Naive thymus-derived CD8-positive, alpha-beta T cell (primary cell): ENCODE measurements at regions of chr6 and their contacts with region 1.

Region 1: DNA sequence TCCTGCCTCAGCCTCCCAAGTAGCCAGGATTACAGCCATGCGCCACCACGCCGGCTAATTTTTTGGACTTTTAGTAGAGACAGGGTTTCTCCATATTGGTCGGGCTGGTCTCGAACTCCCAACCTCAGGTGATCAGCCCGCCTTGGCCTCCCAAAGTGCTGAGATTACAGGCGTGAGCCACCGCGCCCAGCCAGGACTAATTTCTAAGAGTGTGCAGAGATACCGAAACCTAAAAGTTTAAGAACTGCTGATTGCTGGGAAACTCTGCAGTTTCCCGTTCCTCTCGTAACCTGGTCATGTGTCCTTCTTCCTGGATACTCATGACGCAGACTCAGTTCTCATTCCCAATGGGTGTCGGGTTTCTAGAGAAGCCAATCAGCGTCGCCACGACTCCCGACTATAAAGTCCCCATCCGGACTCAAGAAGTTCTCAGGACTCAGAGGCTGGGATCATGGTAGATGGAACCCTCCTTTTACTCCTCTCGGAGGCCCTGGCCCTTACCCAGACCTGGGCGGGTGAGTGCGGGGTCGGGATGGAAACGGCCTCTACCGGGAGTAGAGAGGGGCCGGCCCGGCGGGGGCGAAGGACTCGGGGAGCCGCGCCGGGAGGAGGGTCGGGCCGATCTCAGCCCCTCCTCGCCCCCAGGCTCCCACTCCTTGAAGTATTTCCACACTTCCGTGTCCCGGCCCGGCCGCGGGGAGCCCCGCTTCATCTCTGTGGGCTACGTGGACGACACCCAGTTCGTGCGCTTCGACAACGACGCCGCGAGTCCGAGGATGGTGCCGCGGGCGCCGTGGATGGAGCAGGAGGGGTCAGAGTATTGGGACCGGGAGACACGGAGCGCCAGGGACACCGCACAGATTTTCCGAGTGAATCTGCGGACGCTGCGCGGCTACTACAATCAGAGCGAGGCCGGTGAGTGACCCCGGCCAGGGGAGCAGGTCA is at the start of gene HLA-E:
- DNase-seq: peak; percentile 59 to 97 (median 92)
- ATAC-seq: peak; percentile 79 to 82
- H3K4me3 Mint-ChIP-seq: peak within 1 kb of the TSS; percentile 95 to 100 (median 99)
- H3K27ac Mint-ChIP-seq: peak within 1 kb of the TSS; percentile 97 to 100 (median 98)
- H3K4me1 Mint-ChIP-seq: peaks cover 34 to 61% (median 49%) of the 10 kb centered on the region in 4 donors
- H3K27me3 Mint-ChIP-seq: no peaks in the 10 kb centered on the region
- polyA plus RNA-seq, gene HLA-E: 2,699 to 2,977 (median 2,826) TPM

Region 2: GRCh38 chr6:30272017-30272416 is 217.3 kb before region 1 on chr6:
- POLR2A ChIA-PET with region 1: no interaction called
- DNase-seq: no peak
- ATAC-seq: no peak
- H3K4me3 Mint-ChIP-seq: no peak overlapping the region
- H3K27ac Mint-ChIP-seq: no peak overlapping the region
- H3K4me1 Mint-ChIP-seq: no peaks in the 10 kb centered on the region
- H3K27me3 Mint-ChIP-seq: peaks cover 0 to 19% (median 8%) of the 10 kb centered on the region in 5 donors

Region 3: DNA sequence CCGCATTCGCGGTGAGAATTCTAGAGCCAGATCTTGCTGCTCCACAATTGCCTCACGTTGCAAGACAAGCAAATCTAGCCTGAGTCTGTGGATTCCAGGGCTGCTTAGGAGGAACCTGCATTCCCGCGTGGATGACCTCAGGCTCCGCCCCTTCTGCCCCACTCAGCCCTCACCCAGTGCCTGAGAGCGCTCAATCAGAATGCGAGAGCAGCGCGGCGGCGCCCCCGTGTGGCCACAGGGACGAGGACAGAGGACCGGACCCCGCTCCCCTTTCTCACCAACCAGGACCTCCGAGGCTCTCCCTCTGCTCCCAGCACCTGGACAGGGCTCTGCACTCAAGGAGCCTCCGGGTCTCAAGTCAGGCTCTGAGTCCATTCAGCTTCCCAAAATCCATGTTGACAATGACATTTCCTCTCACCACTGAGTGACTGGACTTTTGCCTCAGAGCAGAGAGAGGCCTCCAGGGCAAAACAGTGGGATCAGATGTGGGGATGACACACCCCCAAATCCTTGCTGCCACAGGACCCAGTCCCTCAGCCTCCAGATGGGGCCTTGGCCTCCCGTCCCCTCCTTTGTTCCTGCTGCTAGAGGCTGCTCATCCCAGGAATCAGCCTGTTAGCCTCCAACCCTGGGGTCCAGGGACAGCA is 92.4 kb before region 1 on chr6:
- POLR2A ChIA-PET with region 1: no interaction called
- DNase-seq: peak; percentile 71 to 90 (median 82)
- ATAC-seq: peak; percentile 100
- H3K4me3 Mint-ChIP-seq: peak overlapping the region in 1 of 10 donors; percentile 18
- H3K27ac Mint-ChIP-seq: peak overlapping the region in 1 of 10 donors; percentile 77
- H3K4me1 Mint-ChIP-seq: peaks cover 0 to 1% (median 0%) of the 10 kb centered on the region in 4 donors
- H3K27me3 Mint-ChIP-seq: peaks cover 15 to 60% (median 33%) of the 10 kb centered on the region in 5 donors

Region 4: GRCh38 chr6:30443657-30444450 is 45.5 kb before region 1 on chr6:
- POLR2A ChIA-PET with region 1: no interaction called
- DNase-seq: no peak
- ATAC-seq: peak in 1 of 2 donors; percentile 42
- H3K4me3 Mint-ChIP-seq: peak overlapping the region in 2 of 10 donors; percentile 2 to 9
- H3K27ac Mint-ChIP-seq: no peak overlapping the region
- H3K4me1 Mint-ChIP-seq: peaks cover 3 to 10% (median 4%) of the 10 kb centered on the region in 4 donors
- H3K27me3 Mint-ChIP-seq: peaks cover 68 to 94% (median 76%) of the 10 kb centered on the region in 5 donors

Region 5: DNA sequence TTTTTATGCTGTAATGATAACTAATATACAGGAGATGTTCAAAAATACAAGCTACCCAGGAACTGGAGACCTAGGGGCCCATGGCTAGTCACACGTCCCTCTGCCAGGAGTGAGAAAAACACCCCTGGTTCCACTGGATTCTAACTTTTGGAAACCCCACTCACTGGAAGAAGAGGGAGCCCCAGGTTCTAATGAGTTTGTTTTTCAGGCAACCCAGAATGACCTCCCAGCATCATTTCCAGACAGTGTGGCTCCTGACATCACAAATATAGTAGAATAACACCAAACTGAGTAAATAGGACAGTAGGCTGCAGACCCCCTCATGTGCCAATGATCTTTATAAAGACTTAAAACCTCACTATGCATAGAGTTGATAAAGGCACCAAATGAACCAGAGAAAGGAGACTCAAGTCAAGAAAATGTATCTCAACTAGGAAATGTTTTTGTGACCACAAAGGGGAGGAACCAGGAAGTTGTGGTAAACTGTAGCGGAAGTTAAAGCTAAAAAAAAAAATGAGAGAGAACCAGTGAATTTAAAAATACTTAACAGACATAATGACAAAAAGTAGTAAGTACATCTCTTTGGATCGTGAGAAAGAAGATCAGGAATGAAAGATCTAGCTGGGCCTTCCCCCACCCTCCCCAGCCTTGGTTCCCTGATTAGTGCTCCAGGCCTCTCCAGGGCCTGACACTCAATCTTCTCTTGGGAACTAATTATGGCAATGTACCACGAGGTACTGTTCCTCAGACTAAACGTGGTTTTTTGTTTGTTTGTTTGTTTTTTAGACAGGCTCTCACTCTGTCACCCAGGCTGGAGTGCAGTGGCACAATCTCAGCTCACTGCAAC is 19.8 kb after region 1 on chr6:
- POLR2A ChIA-PET with region 1: interaction called, 540 read pairs
- DNase-seq: peak in 5 of 10 donors; percentile 53 to 87 (median 86)
- ATAC-seq: peak; percentile 88 to 90
- H3K4me3 Mint-ChIP-seq: peak overlapping the region; percentile 65 to 87 (median 76)
- H3K27ac Mint-ChIP-seq: peak overlapping the region; percentile 53 to 96 (median 88)
- H3K4me1 Mint-ChIP-seq: peaks cover 22 to 76% (median 65%) of the 10 kb centered on the region in 4 donors
- H3K27me3 Mint-ChIP-seq: peaks cover 0 to 2% (median 0%) of the 10 kb centered on the region in 5 donors

Region 6: GRCh38 chr6:30533460-30534294 is 44.3 kb after region 1 on chr6:
- POLR2A ChIA-PET with region 1: interaction called, 213 read pairs
- DNase-seq: no peak
- ATAC-seq: no peak
- H3K4me3 Mint-ChIP-seq: peak overlapping the region; percentile 24 to 94 (median 72)
- H3K27ac Mint-ChIP-seq: peak overlapping the region in 4 of 10 donors; percentile 68 to 95 (median 91)
- H3K4me1 Mint-ChIP-seq: peaks cover 8 to 39% (median 29%) of the 10 kb centered on the region in 4 donors
- H3K27me3 Mint-ChIP-seq: no peaks in the 10 kb centered on the region

Region 7: GRCh38 chr6:30556066-30556905 is 66.9 kb after region 1 on chr6 and contains the start of gene GNL1:
- POLR2A ChIA-PET with region 1: interaction called, 33 read pairs
- DNase-seq: peak; percentile 97 to 100 (median 99)
- ATAC-seq: peak; percentile 86 to 87
- H3K4me3 Mint-ChIP-seq: peak within 1 kb of the TSS; percentile 87 to 100 (median 99)
- H3K27ac Mint-ChIP-seq: peak within 1 kb of the TSS; percentile 98 to 100 (median 100)
- H3K4me1 Mint-ChIP-seq: peaks cover 25 to 70% (median 56%) of the 10 kb centered on the region in 4 donors
- H3K27me3 Mint-ChIP-seq: peaks cover 0 to 2% (median 0%) of the 10 kb centered on the region in 5 donors
- polyA plus RNA-seq, gene GNL1: 24.7 to 34.1 (median 28.7) TPM

Region 8: DNA sequence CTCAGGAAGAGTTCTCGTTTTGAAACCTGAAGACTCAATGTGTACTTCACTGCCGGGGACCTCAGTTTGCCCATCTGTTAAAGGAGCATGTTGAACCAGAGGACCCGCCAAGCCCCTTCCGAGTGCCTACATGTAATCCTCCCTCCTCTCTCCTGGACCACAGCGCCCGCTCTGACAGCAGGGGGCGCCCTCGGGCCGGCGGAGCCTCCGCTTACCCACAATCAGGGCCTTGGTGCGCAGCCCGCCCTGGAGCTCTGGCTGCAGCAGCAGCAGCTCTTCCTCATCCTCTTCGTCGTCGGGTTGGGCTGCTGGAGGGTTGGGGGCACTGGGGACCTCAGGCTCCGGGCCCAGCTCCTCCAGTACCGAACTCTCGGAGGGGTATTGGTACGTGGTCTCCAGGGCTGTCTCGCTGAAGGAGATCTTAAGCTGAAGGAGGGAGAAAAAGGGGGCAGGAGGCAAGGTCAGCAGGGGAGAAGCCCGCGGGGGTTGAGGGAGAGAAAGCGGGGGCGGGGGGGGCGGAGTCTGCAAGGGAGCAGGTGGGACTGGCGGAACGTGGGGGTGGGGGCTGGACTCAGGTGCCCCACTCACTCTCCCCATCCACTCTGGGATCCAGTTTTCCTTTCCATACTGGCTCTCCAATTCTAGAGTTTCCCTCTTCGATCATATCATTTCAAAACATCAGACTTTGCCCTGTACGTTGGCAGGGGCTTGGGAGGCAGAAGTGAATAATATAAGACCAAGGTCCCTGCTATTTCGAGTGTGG is 189.8 kb after region 1 on chr6:
- POLR2A ChIA-PET with region 1: interaction called, 10 read pairs
- DNase-seq: peak; percentile 84 to 98 (median 92)
- ATAC-seq: peak; percentile 51 to 54
- H3K4me3 Mint-ChIP-seq: peak overlapping the region; percentile 94 to 100 (median 99)
- H3K27ac Mint-ChIP-seq: peak overlapping the region; percentile 77 to 99 (median 98)
- H3K4me1 Mint-ChIP-seq: peaks cover 21 to 60% (median 47%) of the 10 kb centered on the region in 4 donors
- H3K27me3 Mint-ChIP-seq: no peaks in the 10 kb centered on the region